Mammary epithelial cell (primary cell): ENCODE measurements at regions of chr16 and their contacts with region 1.

Region 1: DNA sequence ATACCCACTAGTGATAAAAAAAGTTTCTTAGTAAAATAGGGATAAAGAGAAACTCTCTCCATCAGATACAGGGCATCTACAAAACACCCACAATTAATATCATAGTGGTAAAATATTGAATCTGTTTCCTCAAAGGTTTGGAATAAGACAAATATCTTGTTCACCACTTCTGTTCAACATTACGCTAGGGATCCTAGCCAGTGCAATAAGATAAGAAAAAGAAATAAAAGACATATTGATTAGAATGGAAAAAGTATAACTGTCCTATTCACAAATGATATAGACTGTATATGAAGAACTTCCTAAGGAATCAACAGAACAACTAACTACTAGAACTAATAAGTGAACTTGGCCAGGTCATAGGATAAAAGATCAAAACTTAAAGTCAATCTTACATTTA is 12.9 kb downstream of the LPCAT2 start:
- DNase-seq: no peak
- H3K4me3 ChIP-seq: no peak overlapping the region
- H3K27ac ChIP-seq: no peak overlapping the region
- H3K4me1 ChIP-seq: peaks cover 13% of the 10 kb centered on the region
- H3K27me3 ChIP-seq: no peaks in the 10 kb centered on the region
- CTCF ChIP-seq: no peak

Region 2: DNA sequence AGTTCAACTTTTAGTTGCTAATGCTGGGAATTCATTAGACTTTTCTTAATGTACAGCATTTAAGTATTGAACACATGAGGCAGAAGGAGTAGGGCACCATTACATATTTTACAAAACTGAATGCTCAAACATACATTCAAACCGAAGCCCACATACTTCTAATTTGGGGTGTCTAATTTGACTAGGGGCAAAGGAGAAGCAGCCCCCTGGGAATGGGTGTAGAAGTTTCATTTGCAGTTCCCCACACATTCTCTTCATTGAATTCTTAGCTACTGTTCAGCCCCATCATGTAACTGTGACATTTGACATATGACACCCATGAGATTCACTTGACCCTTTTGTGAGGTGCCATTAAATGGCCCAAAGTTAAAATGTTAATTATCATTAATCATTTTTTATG is 181.3 kb before region 1 on chr16:
- CTCF ChIA-PET with region 1: no interaction called
- dilution Hi-C with region 1: no loop called
- in situ Hi-C with region 1: no loop called
- intact Hi-C with region 1: no loop called
- DNase-seq: no peak
- H3K4me3 ChIP-seq: no peak overlapping the region
- H3K27ac ChIP-seq: no peak overlapping the region
- H3K4me1 ChIP-seq: no peaks in the 10 kb centered on the region
- H3K27me3 ChIP-seq: peaks cover 2% of the 10 kb centered on the region
- CTCF ChIP-seq: no peak

Region 3: DNA sequence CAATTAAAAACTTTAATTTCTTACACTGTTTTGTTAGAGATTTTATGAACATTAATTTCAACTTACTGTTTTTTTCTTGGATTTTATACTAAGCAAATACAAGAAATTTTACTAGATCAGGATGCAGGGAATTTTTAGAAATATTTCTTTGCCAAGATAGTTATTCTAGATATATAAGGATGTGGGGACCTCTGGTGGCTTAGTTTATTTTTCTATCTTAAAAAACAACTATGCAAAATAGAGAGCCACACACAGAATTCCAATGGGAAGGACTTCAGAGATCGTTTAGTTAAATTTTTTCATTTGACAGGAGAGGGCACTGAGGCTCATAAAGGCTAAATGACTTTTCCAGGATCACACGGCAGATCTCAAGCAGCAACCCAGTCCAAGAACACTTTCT is 21.7 kb after region 1 on chr16:
- CTCF ChIA-PET with region 1: no interaction called
- dilution Hi-C with region 1: no loop called
- in situ Hi-C with region 1: no loop called
- intact Hi-C with region 1: loop called (anchors 2 kb)
- DNase-seq: no peak
- H3K4me3 ChIP-seq: no peak overlapping the region
- H3K27ac ChIP-seq: no peak overlapping the region
- H3K4me1 ChIP-seq: peaks cover 25% of the 10 kb centered on the region
- H3K27me3 ChIP-seq: no peaks in the 10 kb centered on the region
- CTCF ChIP-seq: peak; percentile 11 to 35